Left lung (tissue), 14 donors: ENCODE measurements at regions of chr5 and their contacts with region 1.

Region 1: DNA sequence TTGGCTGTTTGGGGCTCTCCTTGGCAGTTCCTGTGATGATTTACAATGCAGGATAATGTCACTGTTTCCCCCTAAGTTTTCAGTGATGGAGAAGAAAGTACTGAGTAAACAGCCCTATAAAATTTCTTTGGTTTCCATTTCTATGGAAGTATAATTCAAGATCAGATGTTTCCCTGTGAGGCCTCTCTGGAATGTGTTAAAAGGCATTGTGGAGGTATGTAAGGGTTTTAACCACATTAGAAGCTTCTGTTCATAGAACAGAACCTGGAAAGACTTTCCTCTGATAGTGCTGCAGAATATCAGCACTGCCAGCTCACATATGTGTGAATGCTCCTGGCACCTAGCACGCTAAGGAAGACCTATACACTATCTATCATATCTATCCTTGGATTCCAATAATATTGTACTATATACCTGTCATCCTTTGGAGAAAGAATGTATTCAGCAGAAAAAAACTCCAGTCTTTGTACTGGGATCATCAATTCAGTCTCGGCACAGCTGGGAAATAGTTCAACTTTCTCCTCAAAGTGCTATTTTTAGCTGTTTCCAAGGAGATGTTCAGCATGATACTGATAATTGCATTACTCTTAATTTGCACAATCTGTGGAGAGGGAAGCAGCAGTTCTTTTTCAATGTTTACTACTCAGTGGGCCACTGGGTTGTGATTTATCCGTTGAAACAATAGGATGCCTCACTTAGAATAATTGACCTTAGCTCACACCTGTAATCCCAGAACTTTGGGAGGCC is 21.9 kb downstream of the TTC1 start:
- DNase-seq: peak in 2 of 4 donors; percentile 36 to 48
- ATAC-seq: peak; percentile 48
- H3K4me3 ChIP-seq: no peak overlapping the region
- H3K27ac ChIP-seq: no peak overlapping the region
- H3K4me1 ChIP-seq: peaks cover 0 to 7% of the 10 kb centered on the region in 2 donors
- H3K27me3 ChIP-seq: no peaks in the 10 kb centered on the region
- CTCF ChIP-seq: no peak

Region 2: DNA sequence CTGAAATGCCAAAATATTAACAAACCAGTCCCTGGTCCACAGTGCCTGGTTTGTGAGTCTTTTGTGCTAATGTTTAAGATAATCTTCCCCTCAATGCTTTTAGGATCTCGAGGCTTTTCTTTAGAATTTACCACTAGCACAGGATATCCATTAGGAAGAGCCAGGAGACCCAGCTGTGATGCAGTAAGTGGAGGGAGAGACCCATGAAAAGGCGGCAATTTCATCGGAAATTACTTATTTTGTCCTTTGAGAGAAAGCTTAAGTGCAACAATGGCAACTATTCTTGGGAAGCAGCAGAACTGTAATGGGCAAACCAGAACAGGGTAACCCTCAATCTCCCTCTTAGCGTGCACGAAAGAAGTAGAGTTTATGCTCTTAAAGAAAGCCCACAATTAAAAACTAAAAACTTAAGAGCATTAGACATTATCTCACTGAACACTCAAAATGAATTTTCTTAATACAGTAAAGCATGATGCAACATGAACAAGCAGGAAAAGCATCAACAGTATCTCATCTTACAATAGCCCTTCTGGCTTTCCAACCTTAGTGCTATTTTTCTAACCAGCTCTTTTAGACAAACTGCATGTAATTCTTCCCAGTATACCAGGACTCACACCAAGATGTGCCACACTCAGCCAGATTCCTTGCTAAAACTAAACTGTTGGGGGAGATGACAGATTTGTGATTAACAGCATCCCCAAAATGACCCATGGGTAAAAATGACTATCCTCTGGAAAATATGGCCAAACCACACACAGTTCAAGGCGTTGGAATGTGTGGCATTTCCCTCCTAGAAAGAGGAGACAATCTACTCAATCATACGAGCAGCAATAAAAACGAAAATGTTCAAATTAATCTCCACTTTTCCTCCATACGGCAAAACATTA is 52.1 kb after region 1 on chr5:
- intact Hi-C with region 1: no loop called
- DNase-seq: no peak
- ATAC-seq: peak; percentile 18
- H3K4me3 ChIP-seq: no peak overlapping the region
- H3K27ac ChIP-seq: peak overlapping the region in 1 of 2 donors; percentile 7
- H3K4me1 ChIP-seq: peaks cover 5 to 12% of the 10 kb centered on the region in 2 donors
- H3K27me3 ChIP-seq: no peaks in the 10 kb centered on the region
- CTCF ChIP-seq: no peak

Region 3: GRCh38 chr5:160188142-160189015 is 157.6 kb after region 1 on chr5:
- intact Hi-C with region 1: loop called in 1 of 2 experiments (anchors 10 kb)
- DNase-seq: peak; percentile 65 to 85 (median 76)
- ATAC-seq: peak; percentile 82
- H3K4me3 ChIP-seq: peak overlapping the region; percentile 34 to 39
- H3K27ac ChIP-seq: peak overlapping the region; percentile 69 to 79
- H3K4me1 ChIP-seq: peaks cover 0 to 11% of the 10 kb centered on the region in 2 donors
- H3K27me3 ChIP-seq: peaks cover 0 to 6% of the 10 kb centered on the region in 2 donors
- CTCF ChIP-seq: no peak

Region 4: DNA sequence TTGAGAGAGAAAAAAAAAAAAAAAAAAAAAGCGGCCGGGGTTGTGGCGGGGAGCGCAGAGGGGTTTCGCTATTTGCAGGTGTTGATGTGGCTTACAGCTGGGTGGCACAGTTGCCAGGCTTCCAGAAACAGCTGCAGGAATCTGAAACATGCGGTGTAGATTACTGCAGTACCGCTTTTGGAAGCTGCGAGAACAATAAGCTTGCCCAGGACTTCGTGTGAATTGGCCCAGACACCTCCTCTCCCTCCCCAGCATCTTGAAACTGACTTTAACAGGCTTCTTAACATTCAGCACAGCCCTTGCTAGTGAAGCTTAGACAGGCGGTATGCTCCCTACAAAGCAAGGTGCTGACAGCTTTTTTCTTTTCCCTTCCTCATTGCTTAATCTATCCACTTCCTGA is 717.2 kb after region 1 on chr5:
- intact Hi-C with region 1: no loop called
- DNase-seq: no peak
- ATAC-seq: no peak
- H3K4me3 ChIP-seq: no peak overlapping the region
- H3K27ac ChIP-seq: no peak overlapping the region
- H3K4me1 ChIP-seq: no peaks in the 10 kb centered on the region
- H3K27me3 ChIP-seq: no peaks in the 10 kb centered on the region
- CTCF ChIP-seq: no peak